Psoas muscle (tissue), 8 donors: ENCODE measurements at regions of chr11 and their contacts with region 1.

Region 1: DNA sequence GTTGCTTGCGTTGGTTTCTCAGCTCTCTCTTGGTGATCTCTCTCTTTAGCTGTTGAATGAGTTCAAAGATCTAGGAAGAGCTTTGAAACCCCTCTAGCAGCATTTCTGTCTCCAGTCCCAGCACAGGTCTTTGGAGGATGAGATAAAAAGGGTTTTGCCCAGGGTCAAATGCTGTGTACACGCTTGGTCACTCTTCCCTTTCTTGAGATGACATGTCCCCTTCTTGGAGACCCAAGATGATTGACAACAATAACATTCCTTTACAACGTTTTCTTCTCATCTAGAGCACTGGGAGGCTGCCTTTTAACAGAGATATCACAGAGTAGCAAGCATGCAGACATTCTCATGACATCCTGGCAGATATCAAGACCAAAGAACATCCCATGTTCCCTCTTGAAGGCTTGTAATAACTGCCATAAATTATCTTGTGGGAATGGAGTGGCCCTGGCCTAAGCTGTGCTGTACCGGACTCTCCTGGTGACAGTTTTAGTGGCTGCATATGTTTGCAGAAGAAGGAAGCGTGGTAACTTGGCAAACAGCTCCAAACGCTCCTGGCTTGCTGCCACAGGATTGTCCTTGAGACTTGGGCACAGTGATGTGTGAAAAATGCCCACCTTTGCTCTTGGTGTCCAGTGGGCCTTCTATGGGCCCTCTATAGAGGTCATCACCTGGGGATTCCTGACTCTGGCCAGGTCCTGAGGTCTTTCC is 107.8 kb downstream of the PTPRJ start:
- DNase-seq: no peak
- ATAC-seq: peak; percentile 23 to 68 (median 42)
- H3K4me3 ChIP-seq: no peak overlapping the region
- H3K27ac ChIP-seq: no peak overlapping the region
- H3K4me1 ChIP-seq: no peaks in the 10 kb centered on the region
- H3K27me3 ChIP-seq: no peaks in the 10 kb centered on the region
- CTCF ChIP-seq: no peak

Region 2: GRCh38 chr11:47932544-47932943 is 155.6 kb before region 1 on chr11:
- intact Hi-C with region 1: no loop called
- DNase-seq: no peak
- ATAC-seq: no peak
- H3K4me3 ChIP-seq: no peak overlapping the region
- H3K27ac ChIP-seq: no peak overlapping the region
- H3K4me1 ChIP-seq: peaks cover 5% of the 10 kb centered on the region
- H3K27me3 ChIP-seq: no peaks in the 10 kb centered on the region
- CTCF ChIP-seq: no peak

Region 3: GRCh38 chr11:47980245-47981049 is 107.7 kb before region 1 on chr11 and contains the start of gene PTPRJ:
- intact Hi-C with region 1: loop called in 1 of 2 experiments (anchors 5 kb)
- DNase-seq: peak; percentile 57 to 73
- ATAC-seq: peak; percentile 62 to 68 (median 67)
- H3K4me3 ChIP-seq: peak within 1 kb of the TSS; percentile 90
- H3K27ac ChIP-seq: peak within 1 kb of the TSS; percentile 53
- H3K4me1 ChIP-seq: peaks cover 8% of the 10 kb centered on the region
- H3K27me3 ChIP-seq: peaks cover 0 to 2% (median 0%) of the 10 kb centered on the region in 3 donors
- CTCF ChIP-seq: no peak
- total RNA-seq, gene PTPRJ: 2.6 to 12.4 (median 4.7) TPM